Activated CD4-positive, alpha-beta memory T cell treated with anti-CD3 and anti-CD28 coated beads for 36 hours (primary cell): ENCODE measurements at regions of chr1 and their contacts with region 1.

Region 1: GRCh38 chr1:230642263-230642959 is at the start of gene COG2:
- DNase-seq: peak; percentile 96
- H3K4me3 Mint-ChIP-seq: peak within 1 kb of the TSS; percentile 98
- H3K27ac Mint-ChIP-seq: peak within 1 kb of the TSS; percentile 92
- H3K4me1 Mint-ChIP-seq: peaks cover 46% of the 10 kb centered on the region
- H3K27me3 Mint-ChIP-seq: peaks cover 14% of the 10 kb centered on the region
- total RNA-seq, gene COG2: 29.6 to 32.3 TPM

Region 2: GRCh38 chr1:230867903-230868735 is 225.7 kb after region 1 on chr1 and contains the start of gene C1orf198:
- CTCF ChIA-PET with region 1: interaction called, 3 read pairs
- POLR2A ChIA-PET with region 1: no interaction called
- intact Hi-C with region 1: loop called (anchors 2 kb)
- DNase-seq: peak; percentile 83
- H3K4me3 Mint-ChIP-seq: peak within 1 kb of the TSS; percentile 82
- H3K27ac Mint-ChIP-seq: no peak within 1 kb of the TSS
- H3K4me1 Mint-ChIP-seq: peaks cover 26% of the 10 kb centered on the region
- H3K27me3 Mint-ChIP-seq: peaks cover 24% of the 10 kb centered on the region
- total RNA-seq, gene C1orf198: 6.4 to 7.2 TPM

Region 3: DNA sequence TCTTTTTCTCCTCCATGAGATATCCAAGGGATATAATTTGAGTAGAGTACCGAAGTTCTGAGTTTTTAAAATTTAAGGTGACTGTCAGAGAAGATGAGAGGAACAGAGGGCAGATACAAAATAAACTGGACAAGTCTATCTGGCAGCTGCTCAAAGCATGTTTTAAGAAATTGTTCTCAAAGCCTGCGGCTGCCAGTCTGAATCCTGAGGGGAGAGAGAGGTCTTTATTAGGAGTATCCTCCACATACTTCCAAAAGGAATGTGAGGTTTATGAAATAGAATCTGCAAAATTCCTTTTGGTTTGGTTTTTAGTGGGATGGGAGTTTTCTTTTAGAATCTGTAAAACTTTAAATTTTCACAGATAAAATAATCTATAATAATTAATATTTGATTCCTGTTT is 295.0 kb after region 1 on chr1:
- CTCF ChIA-PET with region 1: no interaction called
- POLR2A ChIA-PET with region 1: no interaction called
- intact Hi-C with region 1: no loop called
- DNase-seq: no peak
- H3K4me3 Mint-ChIP-seq: no peak overlapping the region
- H3K27ac Mint-ChIP-seq: no peak overlapping the region
- H3K4me1 Mint-ChIP-seq: peaks cover 10% of the 10 kb centered on the region
- H3K27me3 Mint-ChIP-seq: no peaks in the 10 kb centered on the region

Region 4: GRCh38 chr1:231040019-231040799 is 397.8 kb after region 1 on chr1 and contains the start of gene FAM89A:
- CTCF ChIA-PET with region 1: no interaction called
- POLR2A ChIA-PET with region 1: no interaction called
- intact Hi-C with region 1: loop called (anchors 2 kb)
- DNase-seq: peak; percentile 81
- H3K4me3 Mint-ChIP-seq: peak within 1 kb of the TSS; percentile 74
- H3K27ac Mint-ChIP-seq: no peak within 1 kb of the TSS
- H3K4me1 Mint-ChIP-seq: peaks cover 29% of the 10 kb centered on the region
- H3K27me3 Mint-ChIP-seq: no peaks in the 10 kb centered on the region
- total RNA-seq, gene FAM89A: 14.3 to 15.1 TPM

Region 5: DNA sequence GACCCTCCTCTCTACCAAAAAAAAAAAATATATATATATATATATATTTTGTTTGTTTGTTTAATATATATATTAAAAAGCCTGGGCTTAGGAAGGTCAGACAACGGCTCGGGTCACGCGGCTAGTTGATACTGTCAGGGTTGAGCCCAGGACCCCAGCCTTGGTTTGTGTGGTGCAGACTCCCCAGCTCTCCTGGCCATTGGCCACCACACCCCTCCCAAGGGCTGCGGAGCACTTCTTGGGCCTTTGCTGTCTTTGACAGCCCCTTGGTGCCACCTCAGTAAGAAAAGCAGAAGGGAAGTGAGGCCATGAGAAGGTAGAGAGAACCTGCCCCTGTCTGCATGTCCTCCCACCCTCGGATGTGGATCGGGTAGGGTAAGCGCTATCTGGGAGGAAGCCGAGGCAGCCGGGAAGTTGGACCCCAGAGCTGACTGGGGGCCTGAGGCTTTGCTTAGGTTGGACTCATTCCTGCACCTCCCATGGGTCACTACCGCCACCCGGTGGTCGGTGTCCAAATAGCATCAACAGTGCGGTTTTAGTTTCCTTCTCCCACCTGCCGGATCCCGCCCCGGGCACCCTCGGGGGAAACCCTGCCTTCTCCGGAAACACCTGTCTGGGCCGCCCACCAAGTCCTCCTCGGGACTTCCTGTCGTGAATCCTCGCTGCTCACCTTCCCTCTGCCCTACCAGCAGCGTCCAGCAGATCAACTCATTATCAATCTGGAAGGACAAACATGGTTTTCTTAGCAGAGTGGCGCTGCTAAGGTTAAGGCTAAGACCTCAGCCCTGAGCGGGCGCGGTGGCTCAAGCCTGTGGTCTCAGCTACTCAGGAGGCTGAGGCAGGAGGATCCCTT is 568.8 kb after region 1 on chr1:
- CTCF ChIA-PET with region 1: interaction called, 3 read pairs
- POLR2A ChIA-PET with region 1: no interaction called
- intact Hi-C with region 1: loop called (anchors 5 kb)
- DNase-seq: peak; percentile 96
- H3K4me3 Mint-ChIP-seq: peak overlapping the region; percentile 76
- H3K27ac Mint-ChIP-seq: peak overlapping the region; percentile 51
- H3K4me1 Mint-ChIP-seq: peaks cover 11% of the 10 kb centered on the region
- H3K27me3 Mint-ChIP-seq: no peaks in the 10 kb centered on the region